Caco-2 (cell line): ENCODE measurements at regions of chr4 and their contacts with region 1.

Region 1: GRCh38 chr4:185369731-185370130 is 26.0 kb downstream of the LRP2BP start:
- DNase-seq: no peak
- H3K4me3 ChIP-seq: no peak overlapping the region
- H3K4me3 Mint-ChIP-seq: no peak overlapping the region
- H3K27ac Mint-ChIP-seq: no peak overlapping the region
- H3K4me1 ChIP-seq: no peaks in the 10 kb centered on the region
- H3K4me1 Mint-ChIP-seq: no peaks in the 10 kb centered on the region
- H3K27me3 ChIP-seq: no peaks in the 10 kb centered on the region
- H3K27me3 Mint-ChIP-seq: no peaks in the 10 kb centered on the region
- CTCF ChIP-seq: no peak

Region 2: GRCh38 chr4:184171011-184171410 is 1198.7 kb before region 1 on chr4:
- CTCF ChIA-PET with region 1: no interaction called
- POLR2A ChIA-PET with region 1: no interaction called
- intact Hi-C with region 1: no loop called
- DNase-seq: no peak
- H3K4me3 ChIP-seq: no peak overlapping the region
- H3K4me3 Mint-ChIP-seq: no peak overlapping the region
- H3K27ac Mint-ChIP-seq: no peak overlapping the region
- H3K4me1 ChIP-seq: no peaks in the 10 kb centered on the region
- H3K4me1 Mint-ChIP-seq: no peaks in the 10 kb centered on the region
- H3K27me3 ChIP-seq: no peaks in the 10 kb centered on the region
- H3K27me3 Mint-ChIP-seq: peaks cover 7% of the 10 kb centered on the region
- CTCF ChIP-seq: no peak

Region 3: GRCh38 chr4:185381288-185382196 is 11.8 kb after region 1 on chr4:
- CTCF ChIA-PET with region 1: no interaction called
- POLR2A ChIA-PET with region 1: interaction called, 11 read pairs
- intact Hi-C with region 1: no loop called
- DNase-seq: no peak
- H3K4me3 ChIP-seq: no peak overlapping the region
- H3K4me3 Mint-ChIP-seq: no peak overlapping the region
- H3K27ac Mint-ChIP-seq: no peak overlapping the region
- H3K4me1 ChIP-seq: peaks cover 4% of the 10 kb centered on the region; the same call in 1 of the 2 replicates
- H3K4me1 Mint-ChIP-seq: no peaks in the 10 kb centered on the region
- H3K27me3 ChIP-seq: no peaks in the 10 kb centered on the region
- H3K27me3 Mint-ChIP-seq: no peaks in the 10 kb centered on the region
- CTCF ChIP-seq: no peak